Right cardiac atrium (tissue), 5 donors: ENCODE measurements at regions of chr5 and their contacts with region 1.

Region 1: DNA sequence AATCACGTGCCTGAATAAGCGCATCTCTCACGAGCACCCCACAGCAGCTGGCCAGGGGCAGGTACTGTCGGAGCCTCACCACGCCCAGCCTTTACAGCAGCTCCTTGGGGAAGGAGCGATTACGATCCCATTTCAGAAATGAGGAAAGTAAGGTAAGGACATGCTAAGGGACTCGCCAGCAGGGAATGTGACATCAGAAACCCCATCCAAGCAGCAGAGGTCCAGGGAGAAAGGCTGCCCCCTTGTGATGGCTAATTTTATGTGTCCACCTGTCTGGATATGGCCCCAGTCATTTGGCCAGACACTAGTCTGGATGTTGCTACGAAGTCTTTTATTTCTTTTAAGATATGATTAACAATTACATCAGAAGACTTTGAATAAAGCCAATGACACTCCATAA is 77.3 kb downstream of the UBE2QL1 start:
- DNase-seq: no peak
- ATAC-seq: peak; percentile 48 to 61
- H3K4me3 ChIP-seq: no peak overlapping the region
- H3K27ac ChIP-seq: no peak overlapping the region
- H3K4me1 ChIP-seq: no peaks in the 10 kb centered on the region
- H3K27me3 ChIP-seq: no peaks in the 10 kb centered on the region

Region 2: GRCh38 chr5:6291961-6292360 is 233.9 kb before region 1 on chr5:
- intact Hi-C with region 1: loop called in 1 of 4 experiments (anchors 10 kb)
- DNase-seq: no peak
- ATAC-seq: no peak
- H3K4me3 ChIP-seq: no peak overlapping the region
- H3K27ac ChIP-seq: no peak overlapping the region
- H3K4me1 ChIP-seq: no peaks in the 10 kb centered on the region
- H3K27me3 ChIP-seq: no peaks in the 10 kb centered on the region

Region 3: DNA sequence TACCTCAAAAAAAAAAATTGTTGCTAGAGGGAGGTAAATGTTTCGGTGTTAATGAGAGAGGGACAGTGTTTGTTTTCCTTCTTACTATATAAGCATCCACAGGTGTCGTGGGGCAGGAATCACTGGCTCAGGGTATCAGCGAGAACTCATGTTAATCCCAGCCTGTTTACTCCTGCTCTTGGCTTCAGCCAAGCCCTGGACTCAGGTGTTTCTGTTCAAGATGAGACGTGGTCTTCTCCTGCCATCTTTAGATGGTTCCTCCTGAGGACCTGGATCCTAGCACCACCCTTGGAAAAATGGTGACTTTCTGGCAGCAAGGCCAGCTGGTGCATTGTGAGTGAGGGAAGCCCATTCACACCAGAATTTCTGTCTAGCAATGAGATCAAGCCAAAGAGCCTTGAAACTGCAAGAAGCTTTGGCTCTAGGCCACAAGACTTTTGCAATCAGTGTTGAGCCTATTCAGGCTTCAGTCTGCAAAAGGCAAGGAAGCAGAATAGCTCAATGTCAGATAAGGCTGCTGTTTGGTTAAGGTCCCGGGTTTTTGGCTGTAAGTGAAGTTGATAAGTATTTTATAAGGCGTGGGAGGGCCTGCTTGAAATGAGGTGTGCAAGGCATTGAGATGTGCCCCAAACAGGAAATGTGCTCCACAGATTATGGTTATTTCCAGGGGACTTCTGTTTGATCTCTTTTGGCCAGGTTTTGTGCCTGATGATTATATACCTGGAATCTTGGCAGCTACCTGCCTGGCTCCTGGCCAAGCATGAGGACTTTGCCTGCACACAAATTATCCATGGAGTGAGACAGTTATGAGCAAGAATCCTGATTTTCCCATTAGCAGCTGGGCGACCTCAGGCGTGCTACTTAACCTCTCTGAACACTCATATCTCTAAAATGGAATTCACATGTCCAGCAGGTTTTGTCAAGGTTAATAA is 287.2 kb after region 1 on chr5:
- intact Hi-C with region 1: no loop called
- DNase-seq: peak in 2 of 3 donors; percentile 44 to 65
- ATAC-seq: peak; percentile 96
- H3K4me3 ChIP-seq: no peak overlapping the region
- H3K27ac ChIP-seq: no peak overlapping the region
- H3K4me1 ChIP-seq: no peaks in the 10 kb centered on the region
- H3K27me3 ChIP-seq: no peaks in the 10 kb centered on the region